ENCODE measurements at regions of chr19 and their contacts with region 1.

Region 1: DNA sequence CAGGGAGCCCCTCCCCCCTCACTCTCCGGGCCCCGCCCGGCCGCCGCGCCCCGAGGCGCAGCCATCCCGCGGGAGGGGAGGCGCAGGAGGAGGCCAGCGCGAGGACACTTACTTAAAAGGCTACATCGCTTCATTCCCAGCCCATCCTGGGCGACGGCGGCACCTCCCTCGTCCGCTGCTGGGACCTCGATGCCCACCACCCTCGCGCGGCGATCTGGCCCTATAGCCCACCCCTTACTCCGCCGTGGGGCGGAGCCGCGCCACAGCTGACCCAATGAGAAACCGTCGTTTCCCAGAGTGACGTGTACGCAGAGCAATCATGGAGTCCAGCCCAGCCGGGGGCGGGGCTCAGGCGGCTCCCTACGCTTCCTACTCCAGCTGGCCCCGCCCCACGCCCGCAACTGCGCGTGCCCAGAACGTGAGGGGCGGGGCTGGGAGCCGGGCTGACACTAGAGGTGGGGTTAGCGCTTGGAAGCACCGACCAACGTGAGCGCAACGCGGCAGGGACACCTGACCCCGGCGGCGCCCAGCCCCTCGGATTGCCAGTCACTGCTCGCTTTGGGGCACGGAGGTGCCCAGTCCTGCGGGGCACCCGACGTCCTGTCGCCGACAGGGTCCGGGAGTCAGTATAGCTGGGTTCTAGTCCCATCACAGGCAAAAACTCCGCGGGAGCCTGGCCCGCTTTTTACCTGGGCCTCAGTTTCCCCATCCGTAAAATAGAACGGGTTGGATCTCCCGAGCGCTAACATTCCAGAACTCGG is at the start of gene ANKRD27:
- DNase-seq: peak; percentile 94 to 99
- H3K4me3 ChIP-seq: peak within 1 kb of the TSS; percentile 93 to 98
- H3K27ac ChIP-seq: peak within 1 kb of the TSS; percentile 61 to 72
- H3K4me1 ChIP-seq: peaks cover 10 to 18% of the 10 kb centered on the region in 2 donors
- H3K27me3 ChIP-seq: peaks cover 10% of the 10 kb centered on the region
- CTCF ChIP-seq: no peak
- total RNA-seq, gene ANKRD27: 17.3 TPM

Region 2: GRCh38 chr19:32405431-32406161 is 269.5 kb before region 1 on chr19 and contains the start of gene DPY19L3:
- intact Hi-C with region 1: loop called (anchors 5 kb)
- DNase-seq: peak; percentile 81 to 97
- H3K4me3 ChIP-seq: peak within 1 kb of the TSS; percentile 93 to 94
- H3K27ac ChIP-seq: peak within 1 kb of the TSS; percentile 99 to 100
- H3K4me1 ChIP-seq: peaks cover 0 to 14% of the 10 kb centered on the region in 2 donors
- H3K27me3 ChIP-seq: no peaks in the 10 kb centered on the region
- CTCF ChIP-seq: no peak
- total RNA-seq, gene DPY19L3: 115 TPM

Region 3: GRCh38 chr19:32532233-32532632 is 142.9 kb before region 1 on chr19:
- intact Hi-C with region 1: no loop called
- DNase-seq: no peak
- H3K4me3 ChIP-seq: no peak overlapping the region
- H3K27ac ChIP-seq: no peak overlapping the region
- H3K4me1 ChIP-seq: no peaks in the 10 kb centered on the region
- H3K27me3 ChIP-seq: no peaks in the 10 kb centered on the region
- CTCF ChIP-seq: no peak

Region 4: GRCh38 chr19:32599736-32600157 is 75.4 kb before region 1 on chr19:
- intact Hi-C with region 1: loop called (anchors 5 kb)
- DNase-seq: no peak
- H3K4me3 ChIP-seq: no peak overlapping the region
- H3K27ac ChIP-seq: no peak overlapping the region
- H3K4me1 ChIP-seq: no peaks in the 10 kb centered on the region
- H3K27me3 ChIP-seq: no peaks in the 10 kb centered on the region
- CTCF ChIP-seq: peak; percentile 35 to 74 (median 66)

Region 5: GRCh38 chr19:32876919-32877285 is 201.8 kb after region 1 on chr19:
- intact Hi-C with region 1: no loop called
- DNase-seq: no peak
- H3K4me3 ChIP-seq: no peak overlapping the region
- H3K27ac ChIP-seq: no peak overlapping the region
- H3K4me1 ChIP-seq: no peaks in the 10 kb centered on the region
- H3K27me3 ChIP-seq: no peaks in the 10 kb centered on the region
- CTCF ChIP-seq: no peak

Region 6: DNA sequence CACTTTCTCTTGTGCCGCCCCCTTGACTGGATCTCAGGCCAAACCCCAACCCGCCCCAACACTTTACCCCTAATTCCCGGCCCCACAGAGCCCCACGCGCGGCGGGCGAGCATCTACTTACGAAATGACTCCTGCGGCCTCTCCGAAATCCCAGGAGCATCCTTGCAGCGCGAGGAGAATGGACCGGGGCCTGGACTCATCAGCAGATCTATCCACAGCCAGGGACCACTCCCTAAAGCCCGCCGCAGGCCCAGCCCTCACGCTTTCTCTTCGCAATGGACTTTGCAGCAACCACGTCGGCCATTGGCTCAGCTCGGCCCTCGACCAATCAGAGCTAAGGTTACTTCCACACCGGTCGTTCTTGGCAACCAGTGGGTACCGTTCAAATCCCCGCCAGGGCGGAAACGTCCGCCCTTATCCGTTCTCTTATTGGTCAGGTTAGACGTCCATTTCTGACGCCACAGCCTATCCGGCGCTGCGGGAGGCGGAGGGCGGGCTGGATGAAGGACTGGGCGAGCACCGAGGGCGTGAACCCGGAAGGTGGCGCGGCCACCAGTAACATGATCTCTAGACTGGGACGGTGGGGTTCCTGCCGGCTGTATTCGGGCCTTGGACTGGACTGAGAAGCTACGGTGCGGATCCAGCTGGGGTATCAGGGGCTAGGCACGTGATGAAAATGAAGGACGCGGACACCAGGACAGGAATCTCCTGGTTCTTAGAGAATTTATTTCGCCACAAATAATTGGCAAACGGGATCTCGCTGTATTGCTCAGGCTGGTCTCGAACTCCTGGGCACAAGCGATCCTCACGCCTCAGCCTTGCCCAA is 296.8 kb after region 1 on chr19 and contains the starts of genes CEP89 and FAAP24:
- intact Hi-C with region 1: loop called (anchors 5 kb)
- DNase-seq: peak; percentile 96 to 99
- H3K4me3 ChIP-seq: peak within 1 kb of the TSS; percentile 70 to 83
- H3K27ac ChIP-seq: peak within 1 kb of the TSS; percentile 63 to 74
- H3K4me1 ChIP-seq: peaks cover 0 to 9% of the 10 kb centered on the region in 2 donors
- H3K27me3 ChIP-seq: no peaks in the 10 kb centered on the region
- CTCF ChIP-seq: no peak
- total RNA-seq, gene CEP89: 7.1 TPM
- total RNA-seq, gene FAAP24: not detected